ENCODE measurements at regions of chr7 and their contacts with region 1.

Region 1: GRCh38 chr7:21945454-21946227 is at the start of gene CDCA7L:
- DNase-seq: peak; percentile 93
- H3K4me3 ChIP-seq: peak within 1 kb of the TSS; percentile 84
- H3K27ac ChIP-seq: peak within 1 kb of the TSS; percentile 79
- H3K4me1 ChIP-seq: peaks cover 63% of the 10 kb centered on the region
- CTCF ChIP-seq: peak; percentile 40; the same call in 1 of the 2 replicates
- total RNA-seq, gene CDCA7L: 155 and 157 TPM in 2 replicates

Region 2: GRCh38 chr7:20219446-20220292 is 1726.0 kb before region 1 on chr7:
- CTCF ChIA-PET with region 1: no interaction called
- POLR2A ChIA-PET with region 1: no interaction called
- intact Hi-C with region 1: loop called (anchors 10 kb)
- DNase-seq: peak; percentile 83
- H3K4me3 ChIP-seq: peak overlapping the region; percentile 22
- H3K27ac ChIP-seq: peak overlapping the region; percentile 71
- H3K4me1 ChIP-seq: peaks cover 41% of the 10 kb centered on the region
- CTCF ChIP-seq: no peak

Region 3: GRCh38 chr7:21912305-21912704 is 33.3 kb before region 1 on chr7:
- CTCF ChIA-PET with region 1: no interaction called
- POLR2A ChIA-PET with region 1: interaction called, 13 read pairs
- intact Hi-C with region 1: no loop called
- DNase-seq: no peak
- H3K4me3 ChIP-seq: no peak overlapping the region
- H3K27ac ChIP-seq: no peak overlapping the region
- H3K4me1 ChIP-seq: peaks cover 40% of the 10 kb centered on the region
- CTCF ChIP-seq: no peak

Region 4: DNA sequence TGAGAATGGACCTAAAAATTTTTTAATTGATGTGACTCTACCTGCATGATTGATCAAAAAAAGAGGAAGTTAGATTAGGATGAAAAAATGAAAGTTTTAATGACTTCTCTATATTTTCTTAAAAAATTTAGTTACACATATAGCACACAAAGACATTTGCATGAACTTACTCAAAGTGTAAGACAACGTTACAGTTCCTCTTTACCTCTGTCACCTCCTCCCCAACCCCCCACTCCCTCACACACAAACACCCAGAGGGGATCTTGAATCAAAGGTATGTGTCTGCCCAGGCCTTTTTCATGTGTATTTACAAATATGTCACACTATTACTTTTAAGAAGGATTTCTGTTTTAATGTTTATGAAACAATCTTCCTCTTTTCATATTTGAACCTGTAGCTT is 20.6 kb after region 1 on chr7:
- CTCF ChIA-PET with region 1: interaction called, 6 read pairs
- POLR2A ChIA-PET with region 1: interaction called, 194 read pairs
- intact Hi-C with region 1: loop called (anchors 1 kb)
- DNase-seq: peak; percentile 88
- H3K4me3 ChIP-seq: peak overlapping the region; percentile 59
- H3K27ac ChIP-seq: peak overlapping the region; percentile 91
- H3K4me1 ChIP-seq: peaks cover 66% of the 10 kb centered on the region
- CTCF ChIP-seq: no peak

Region 5: GRCh38 chr7:22001345-22002004 is 55.8 kb after region 1 on chr7:
- CTCF ChIA-PET with region 1: no interaction called
- POLR2A ChIA-PET with region 1: no interaction called
- intact Hi-C with region 1: loop called (anchors 1 kb)
- DNase-seq: peak; percentile 67
- H3K4me3 ChIP-seq: no peak overlapping the region
- H3K27ac ChIP-seq: no peak overlapping the region
- H3K4me1 ChIP-seq: peaks cover 7% of the 10 kb centered on the region
- CTCF ChIP-seq: peak; percentile 94

Region 6: DNA sequence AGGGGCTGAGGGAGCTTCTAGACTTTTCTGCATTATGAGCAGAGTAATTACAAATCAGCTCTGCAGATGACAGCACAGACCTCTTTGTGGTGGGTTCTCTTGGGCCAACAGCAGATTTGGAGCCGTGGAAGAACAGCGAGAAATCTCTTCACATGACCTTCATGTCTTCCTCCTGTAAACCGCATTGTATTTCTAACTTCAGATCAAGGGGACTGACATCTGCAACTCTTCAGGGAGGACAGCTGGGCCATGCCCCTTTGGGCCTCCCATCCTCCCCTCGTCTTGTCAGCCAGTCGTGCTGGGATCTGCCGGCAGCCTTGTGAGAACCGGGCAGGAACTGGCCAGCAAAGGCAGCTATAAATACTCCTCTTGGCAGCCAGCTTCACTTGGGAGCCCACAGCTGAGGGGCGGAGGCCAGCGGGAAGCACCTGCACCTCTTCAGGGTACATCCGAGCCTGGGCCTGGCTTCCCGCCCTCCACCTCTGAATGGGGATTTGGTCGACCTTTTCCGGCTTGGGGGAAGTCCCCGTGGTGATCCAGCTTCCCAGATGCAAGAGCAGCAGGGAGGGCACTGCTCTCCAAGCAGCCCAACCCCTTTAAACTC is 499.6 kb after region 1 on chr7:
- CTCF ChIA-PET with region 1: no interaction called
- POLR2A ChIA-PET with region 1: no interaction called
- intact Hi-C with region 1: loop called (anchors 5 kb)
- DNase-seq: peak; percentile 93
- H3K4me3 ChIP-seq: peak overlapping the region; percentile 51
- H3K27ac ChIP-seq: peak overlapping the region; percentile 98
- H3K4me1 ChIP-seq: peaks cover 87% of the 10 kb centered on the region
- CTCF ChIP-seq: no peak